ENCODE measurements at regions of chr3 and their contacts with region 1.

Region 1: DNA sequence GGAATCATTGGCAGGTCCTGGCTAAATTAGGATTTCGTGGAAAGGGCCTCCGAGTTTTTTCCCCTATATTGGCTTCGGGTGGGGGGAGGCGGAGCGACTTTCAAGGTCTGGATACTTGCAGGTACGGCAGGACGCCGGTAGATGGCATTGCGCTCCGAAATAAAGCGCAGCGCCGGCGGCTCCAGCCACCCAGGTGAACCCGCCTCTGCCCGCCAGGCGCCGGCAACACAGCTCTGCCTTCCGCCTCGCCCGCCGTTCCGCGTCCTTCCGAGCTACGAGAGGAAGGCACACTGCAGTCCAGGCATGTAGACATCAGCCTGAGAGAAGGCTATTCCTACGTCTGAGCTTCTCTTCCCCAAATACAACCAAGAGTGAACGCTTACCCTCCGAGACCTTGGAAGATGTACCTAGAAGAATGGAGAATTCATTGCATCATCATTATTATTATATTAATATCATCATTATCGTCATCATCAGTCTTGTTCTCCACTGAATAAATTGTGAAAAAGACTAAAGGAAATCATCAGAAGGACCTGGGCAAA is 514.1 kb downstream of the MECOM start:
- DNase-seq: peak; percentile 97
- H3K4me3 Mint-ChIP-seq: peak overlapping the region; percentile 97
- H3K27ac Mint-ChIP-seq: peak overlapping the region; percentile 99
- H3K4me1 Mint-ChIP-seq: peaks cover 20% of the 10 kb centered on the region
- H3K27me3 Mint-ChIP-seq: no peaks in the 10 kb centered on the region
- CTCF ChIP-seq: peak; percentile 98

Region 2: GRCh38 chr3:169041677-169042171 is 107.7 kb before region 1 on chr3:
- CTCF ChIA-PET with region 1: no interaction called
- intact Hi-C with region 1: loop called (anchors 5 kb)
- DNase-seq: no peak
- H3K4me3 Mint-ChIP-seq: no peak overlapping the region
- H3K27ac Mint-ChIP-seq: peak overlapping the region; percentile 28
- H3K4me1 Mint-ChIP-seq: peaks cover 12% of the 10 kb centered on the region
- H3K27me3 Mint-ChIP-seq: no peaks in the 10 kb centered on the region
- CTCF ChIP-seq: peak; percentile 63

Region 3: DNA sequence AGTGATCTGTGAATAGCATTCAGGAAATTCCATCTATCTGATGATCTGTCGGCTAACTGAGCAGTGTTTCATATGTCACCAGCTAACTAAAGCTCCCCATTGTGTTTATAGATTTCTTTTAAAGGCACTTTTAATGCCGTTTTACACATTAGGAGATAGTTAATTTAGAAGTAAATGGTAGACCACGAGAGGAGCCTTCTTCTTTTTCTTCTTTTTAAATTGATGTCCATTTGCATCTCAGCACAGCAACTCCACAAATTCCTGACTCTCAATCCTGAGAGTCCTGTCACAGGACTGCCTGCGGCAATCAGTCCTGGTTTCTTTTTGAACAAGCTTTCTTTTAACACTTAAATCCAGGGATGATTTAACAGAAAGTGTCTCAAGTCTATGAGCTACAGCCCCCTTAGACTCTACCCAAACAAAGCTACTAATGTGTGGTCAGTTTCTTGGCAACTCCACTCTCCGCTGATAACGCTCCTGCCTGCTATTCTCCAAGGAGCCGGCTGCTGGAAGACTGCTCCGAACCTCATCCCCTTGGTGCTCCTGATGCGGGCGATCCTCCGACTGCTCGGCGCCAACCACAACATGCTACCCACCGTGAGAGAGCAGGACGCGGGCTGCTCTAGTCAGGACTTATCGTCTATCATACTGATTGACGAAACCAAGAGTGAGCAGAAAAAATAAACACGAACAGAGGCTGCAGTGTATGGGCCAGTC is 92.7 kb after region 1 on chr3:
- CTCF ChIA-PET with region 1: interaction called, 14 read pairs
- intact Hi-C with region 1: loop called (anchors 2 kb)
- DNase-seq: peak; percentile 52
- H3K4me3 Mint-ChIP-seq: peak overlapping the region; percentile 78
- H3K27ac Mint-ChIP-seq: peak overlapping the region; percentile 90
- H3K4me1 Mint-ChIP-seq: peaks cover 52% of the 10 kb centered on the region
- H3K27me3 Mint-ChIP-seq: no peaks in the 10 kb centered on the region
- CTCF ChIP-seq: no peak

Region 4: GRCh38 chr3:169497567-169498257 is 348.3 kb after region 1 on chr3:
- CTCF ChIA-PET with region 1: interaction called, 5 read pairs
- intact Hi-C with region 1: loop called (anchors 5 kb)
- DNase-seq: peak; percentile 53
- H3K4me3 Mint-ChIP-seq: peak overlapping the region; percentile 22
- H3K27ac Mint-ChIP-seq: peak overlapping the region; percentile 82
- H3K4me1 Mint-ChIP-seq: peaks cover 65% of the 10 kb centered on the region
- H3K27me3 Mint-ChIP-seq: no peaks in the 10 kb centered on the region
- CTCF ChIP-seq: no peak

Region 5: DNA sequence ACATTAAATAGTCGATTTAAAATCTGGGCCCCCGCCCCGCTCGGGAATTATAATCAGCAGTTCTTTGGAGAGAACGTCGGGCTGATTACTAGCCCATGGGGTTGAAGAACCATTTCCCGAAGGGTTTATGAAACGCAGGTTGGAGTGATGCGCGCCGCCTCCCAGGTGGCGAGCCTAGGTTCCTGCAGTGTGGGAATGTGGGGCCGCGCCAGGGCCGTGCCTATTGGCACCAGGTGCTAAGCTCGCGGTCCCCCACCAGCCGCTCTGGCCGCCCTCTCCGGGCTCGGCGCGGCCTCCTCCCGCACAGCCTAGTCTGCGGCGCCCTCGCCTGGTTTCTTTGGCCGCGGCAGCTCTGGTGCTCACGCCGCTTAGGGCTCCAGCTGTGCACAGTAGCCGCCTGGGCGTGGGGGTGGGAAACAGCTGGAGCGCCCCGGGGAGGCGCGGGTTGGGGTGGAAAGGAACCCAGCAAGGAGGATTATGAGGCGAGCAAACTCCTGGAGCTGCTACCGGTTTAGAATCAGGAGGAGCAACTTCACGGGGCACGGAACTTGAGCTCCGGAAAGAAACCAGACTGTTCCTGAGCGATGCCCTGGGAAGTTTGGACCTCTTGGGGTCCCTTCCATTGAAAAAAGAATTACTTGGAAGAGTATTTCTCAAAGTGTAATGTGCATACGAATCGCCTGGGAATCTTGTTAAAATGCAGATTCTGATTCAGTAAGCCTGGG is 519.7 kb after region 1 on chr3:
- CTCF ChIA-PET with region 1: interaction called, 66 read pairs
- intact Hi-C with region 1: no loop called
- DNase-seq: peak; percentile 97
- H3K4me3 Mint-ChIP-seq: peak overlapping the region; percentile 79
- H3K27ac Mint-ChIP-seq: peak overlapping the region; percentile 60
- H3K4me1 Mint-ChIP-seq: peaks cover 30% of the 10 kb centered on the region
- H3K27me3 Mint-ChIP-seq: no peaks in the 10 kb centered on the region
- CTCF ChIP-seq: peak; percentile 95

Measured in Calu3 (cell line).